Sciatic nerve (tissue), 2 donors: ENCODE measurements at regions of chr11 and their contacts with region 1.

Region 1: DNA sequence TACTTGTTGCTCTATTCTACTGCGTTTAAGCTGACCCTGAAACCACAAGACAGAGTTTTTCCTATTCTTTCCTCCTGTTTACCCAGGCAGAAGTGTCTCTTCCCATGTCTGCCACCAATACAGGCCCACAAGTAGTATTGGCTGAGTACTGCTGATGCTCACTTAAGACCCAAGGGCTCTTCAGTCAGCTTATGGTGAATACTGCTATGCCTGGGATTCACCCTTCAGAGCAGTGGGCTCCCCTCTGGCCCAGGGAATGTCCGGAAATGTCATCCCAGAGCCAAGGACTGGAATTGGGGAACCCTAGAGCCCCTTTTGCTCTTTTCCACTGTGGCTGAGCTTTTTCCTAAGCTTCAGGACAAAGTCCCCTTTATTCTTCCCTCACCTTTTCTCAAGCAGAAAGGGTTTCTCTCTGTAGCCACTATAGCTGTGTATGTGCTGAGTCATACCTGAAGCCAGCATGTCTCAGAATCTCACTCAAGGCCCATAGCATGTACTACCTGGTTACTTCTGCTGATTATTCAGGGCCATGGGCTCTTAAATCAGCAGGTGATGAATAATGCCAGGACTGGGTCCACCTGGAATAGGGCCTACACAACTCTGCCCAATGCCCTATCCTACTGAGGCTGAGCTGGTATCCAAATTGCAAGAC is 745.8 kb upstream of the ANO5 start:
- DNase-seq: no peak
- ATAC-seq: no peak

Region 2: DNA sequence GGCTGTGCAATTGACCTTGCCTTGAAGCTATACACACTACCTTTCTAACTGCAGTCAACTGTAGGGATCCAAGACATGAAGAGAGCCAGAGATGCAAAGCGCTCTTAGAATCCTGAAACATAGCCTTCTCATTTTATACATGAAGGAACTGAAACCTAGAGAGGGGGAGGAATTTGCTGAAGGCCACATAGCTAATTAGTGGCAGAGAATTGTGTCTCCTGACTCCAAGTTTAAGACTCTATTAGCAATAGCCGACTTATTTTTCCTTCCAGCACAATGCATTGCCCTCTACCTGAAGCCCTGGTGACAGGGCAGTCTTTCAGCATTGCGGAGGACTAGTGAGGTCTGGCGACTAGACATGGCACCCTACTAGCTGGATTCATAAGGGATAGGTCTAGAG is 18.9 kb after region 1 on chr11:
- intact Hi-C with region 1: loop called (anchors 2 kb)
- DNase-seq: no peak
- ATAC-seq: no peak